CD4-positive, alpha-beta memory T cell (primary cell): ENCODE measurements at regions of chr1 and their contacts with region 1.

Region 1: DNA sequence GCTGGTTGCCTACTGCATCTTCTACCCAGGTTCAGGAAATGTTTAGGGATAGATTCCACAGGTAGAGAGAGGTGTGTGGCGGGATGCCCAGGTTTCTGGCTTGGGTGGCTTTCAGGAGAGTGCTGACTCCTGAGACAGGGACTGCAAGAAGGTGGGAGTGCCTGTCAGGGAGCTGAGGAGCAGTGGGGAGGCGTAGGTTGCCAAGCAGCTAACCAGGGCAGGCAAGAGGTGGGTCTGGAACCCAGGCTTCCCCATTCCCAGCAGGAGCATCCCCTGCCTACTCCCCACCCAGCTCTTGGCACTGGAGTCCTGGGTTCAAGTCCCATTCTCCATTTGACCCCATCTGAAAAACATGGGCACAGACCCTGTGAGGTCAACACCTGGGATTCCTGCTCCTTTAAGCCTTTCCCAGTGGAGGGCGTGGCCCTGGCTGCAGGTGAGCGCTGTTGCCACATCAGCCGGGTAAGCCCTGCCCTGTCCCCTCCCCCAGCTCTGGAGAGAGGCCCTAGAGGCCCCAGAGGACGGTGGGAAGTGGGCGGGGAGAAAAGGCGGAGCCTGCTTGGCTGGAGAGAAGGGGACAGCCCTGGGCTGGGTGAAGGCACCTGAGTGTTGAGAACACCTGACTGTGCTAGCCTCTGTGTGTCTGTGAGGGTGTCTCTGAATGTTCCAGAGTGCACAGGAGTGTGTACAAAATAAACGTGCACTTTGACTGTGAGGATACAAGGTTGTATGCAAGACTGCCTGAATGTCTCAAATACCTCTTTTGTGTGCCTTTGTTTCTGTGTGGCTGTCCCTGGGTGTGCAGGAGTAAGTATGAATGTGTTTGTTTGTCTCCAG is 14.0 kb upstream of the SYNC start:
- DNase-seq: peak in 4 of 5 donors; percentile 18 to 28 (median 24)
- H3K4me3 ChIP-seq: no peak overlapping the region
- H3K4me3 Mint-ChIP-seq: peak overlapping the region in 2 of 8 donors; percentile 35 to 45
- H3K27ac ChIP-seq: no peak overlapping the region
- H3K27ac Mint-ChIP-seq: peak overlapping the region in 1 of 7 donors; percentile 36
- H3K4me1 ChIP-seq: peaks cover 15% of the 10 kb centered on the region
- H3K4me1 Mint-ChIP-seq: peaks cover 3 to 17% (median 7%) of the 10 kb centered on the region in 4 donors
- H3K27me3 ChIP-seq: no peaks in the 10 kb centered on the region
- H3K27me3 Mint-ChIP-seq: peaks cover 0 to 2% of the 10 kb centered on the region in 2 donors

Region 2: GRCh38 chr1:32521165-32521564 is 195.4 kb before region 1 on chr1:
- CTCF ChIA-PET with region 1: interaction called, 12 read pairs
- POLR2A ChIA-PET with region 1: no interaction called
- intact Hi-C with region 1: no loop called
- DNase-seq: no peak
- H3K4me3 ChIP-seq: no peak overlapping the region
- H3K4me3 Mint-ChIP-seq: peak overlapping the region; percentile 55 to 82 (median 79)
- H3K27ac ChIP-seq: no peak overlapping the region
- H3K27ac Mint-ChIP-seq: no peak overlapping the region
- H3K4me1 ChIP-seq: no peaks in the 10 kb centered on the region
- H3K4me1 Mint-ChIP-seq: peaks cover 0 to 11% (median 1%) of the 10 kb centered on the region in 4 donors
- H3K27me3 ChIP-seq: no peaks in the 10 kb centered on the region
- H3K27me3 Mint-ChIP-seq: peaks cover 5 to 9% of the 10 kb centered on the region in 2 donors

Region 3: GRCh38 chr1:32729254-32730046 is 12.9 kb after region 1 on chr1:
- CTCF ChIA-PET with region 1: interaction called, 25 read pairs
- POLR2A ChIA-PET with region 1: interaction called, 3 read pairs
- intact Hi-C with region 1: no loop called
- DNase-seq: no peak
- H3K4me3 ChIP-seq: no peak overlapping the region
- H3K4me3 Mint-ChIP-seq: no peak overlapping the region
- H3K27ac ChIP-seq: no peak overlapping the region
- H3K27ac Mint-ChIP-seq: peak overlapping the region in 1 of 7 donors; percentile 36
- H3K4me1 ChIP-seq: peaks cover 13% of the 10 kb centered on the region
- H3K4me1 Mint-ChIP-seq: peaks cover 9 to 15% (median 13%) of the 10 kb centered on the region in 4 donors
- H3K27me3 ChIP-seq: no peaks in the 10 kb centered on the region
- H3K27me3 Mint-ChIP-seq: peaks cover 0 to 5% of the 10 kb centered on the region in 2 donors

Region 4: GRCh38 chr1:32773018-32773763 is 56.7 kb after region 1 on chr1:
- CTCF ChIA-PET with region 1: interaction called, 184 read pairs
- POLR2A ChIA-PET with region 1: interaction called, 17 read pairs
- intact Hi-C with region 1: loop called (anchors 1 kb)
- DNase-seq: peak; percentile 67 to 72 (median 68)
- H3K4me3 ChIP-seq: no peak overlapping the region
- H3K4me3 Mint-ChIP-seq: peak overlapping the region in 1 of 8 donors; percentile 34
- H3K27ac ChIP-seq: no peak overlapping the region
- H3K27ac Mint-ChIP-seq: peak overlapping the region in 3 of 7 donors; percentile 21 to 64 (median 24)
- H3K4me1 ChIP-seq: peaks cover 9% of the 10 kb centered on the region
- H3K4me1 Mint-ChIP-seq: peaks cover 5 to 16% (median 8%) of the 10 kb centered on the region in 4 donors
- H3K27me3 ChIP-seq: no peaks in the 10 kb centered on the region
- H3K27me3 Mint-ChIP-seq: no peaks in the 10 kb centered on the region

Region 5: DNA sequence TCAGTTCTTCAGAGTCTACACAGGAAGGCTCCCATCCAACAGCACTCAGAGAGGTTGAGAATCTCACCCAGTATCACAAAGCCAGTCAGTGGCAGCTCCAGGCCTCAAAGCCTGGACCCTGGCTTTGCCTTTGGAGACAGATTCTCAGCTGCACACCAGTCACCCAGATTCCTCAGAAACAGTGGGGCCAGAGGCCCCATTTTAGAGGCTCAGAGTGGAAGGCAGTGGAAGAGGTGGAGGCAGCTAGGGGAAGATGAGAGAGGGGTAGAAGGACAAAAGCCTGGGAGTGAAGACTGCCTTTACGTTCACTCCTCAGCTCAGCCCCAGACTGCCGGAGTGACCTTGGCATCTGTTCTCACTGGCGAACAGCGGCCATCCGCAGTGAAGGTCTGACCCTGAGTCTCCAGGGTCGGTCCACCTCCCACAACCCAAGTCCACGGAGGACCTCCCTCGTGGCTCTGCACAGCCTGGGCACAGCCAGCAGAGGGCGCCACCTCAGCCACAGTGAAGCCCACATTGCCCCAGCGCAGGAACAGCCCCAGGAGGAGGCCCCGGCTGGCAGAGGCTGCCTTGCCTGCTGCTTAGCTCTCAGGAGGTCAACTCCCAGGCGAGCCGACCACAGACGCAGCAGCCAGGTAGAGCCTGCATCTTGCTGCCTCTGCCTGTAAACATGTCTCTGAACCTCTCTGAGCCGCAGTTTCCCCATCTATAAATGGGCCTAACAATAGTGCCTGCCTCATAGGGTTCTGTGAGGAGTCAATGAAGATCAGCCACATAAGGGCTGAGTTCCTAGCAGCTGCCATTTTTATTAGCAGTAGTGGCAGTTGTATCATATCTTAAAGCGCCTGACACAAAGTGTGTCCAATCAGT is 160.0 kb after region 1 on chr1:
- CTCF ChIA-PET with region 1: interaction called, 41 read pairs
- POLR2A ChIA-PET with region 1: no interaction called
- intact Hi-C with region 1: no loop called
- DNase-seq: peak in 4 of 5 donors; percentile 44 to 57 (median 52)
- H3K4me3 ChIP-seq: no peak overlapping the region
- H3K4me3 Mint-ChIP-seq: peak overlapping the region in 1 of 8 donors; percentile 39
- H3K27ac ChIP-seq: no peak overlapping the region
- H3K27ac Mint-ChIP-seq: no peak overlapping the region
- H3K4me1 ChIP-seq: peaks cover 7% of the 10 kb centered on the region
- H3K4me1 Mint-ChIP-seq: peaks cover 2 to 11% (median 4%) of the 10 kb centered on the region in 4 donors
- H3K27me3 ChIP-seq: peaks cover 8% of the 10 kb centered on the region
- H3K27me3 Mint-ChIP-seq: peaks cover 19 to 37% of the 10 kb centered on the region in 2 donors